ENCODE measurements at regions of chr7 and their contacts with region 1.

Region 1: DNA sequence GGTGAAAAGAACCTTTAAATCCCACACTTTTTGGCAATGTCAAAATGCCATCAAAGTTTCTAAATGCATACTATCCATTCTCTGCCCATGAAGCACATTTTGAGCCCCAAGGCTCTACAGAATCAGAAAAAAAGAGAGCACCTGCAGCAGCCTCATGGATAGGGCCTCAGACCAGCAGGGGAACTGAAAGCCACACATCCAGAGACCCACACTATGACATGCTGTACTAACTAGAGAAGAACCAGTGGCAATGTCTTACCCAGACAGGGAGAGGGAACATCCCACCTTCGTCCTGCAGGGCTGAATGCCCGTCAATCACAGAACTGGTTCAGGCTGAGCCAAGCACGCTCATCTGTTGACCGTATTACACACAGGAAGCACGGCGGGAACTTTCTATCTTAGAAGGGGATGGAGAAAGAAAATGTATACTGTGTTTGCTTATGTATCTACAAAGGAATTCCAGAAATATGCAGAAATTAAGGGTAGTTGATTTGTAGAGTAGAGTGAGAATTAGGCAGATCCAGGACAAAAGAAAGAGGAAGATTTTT is 237.2 kb downstream of the GLI3 start:
- DNase-seq: no peak
- H3K4me3 ChIP-seq: no peak overlapping the region
- H3K27me3 ChIP-seq: no peaks in the 10 kb centered on the region
- CTCF ChIP-seq: no peak

Region 2: DNA sequence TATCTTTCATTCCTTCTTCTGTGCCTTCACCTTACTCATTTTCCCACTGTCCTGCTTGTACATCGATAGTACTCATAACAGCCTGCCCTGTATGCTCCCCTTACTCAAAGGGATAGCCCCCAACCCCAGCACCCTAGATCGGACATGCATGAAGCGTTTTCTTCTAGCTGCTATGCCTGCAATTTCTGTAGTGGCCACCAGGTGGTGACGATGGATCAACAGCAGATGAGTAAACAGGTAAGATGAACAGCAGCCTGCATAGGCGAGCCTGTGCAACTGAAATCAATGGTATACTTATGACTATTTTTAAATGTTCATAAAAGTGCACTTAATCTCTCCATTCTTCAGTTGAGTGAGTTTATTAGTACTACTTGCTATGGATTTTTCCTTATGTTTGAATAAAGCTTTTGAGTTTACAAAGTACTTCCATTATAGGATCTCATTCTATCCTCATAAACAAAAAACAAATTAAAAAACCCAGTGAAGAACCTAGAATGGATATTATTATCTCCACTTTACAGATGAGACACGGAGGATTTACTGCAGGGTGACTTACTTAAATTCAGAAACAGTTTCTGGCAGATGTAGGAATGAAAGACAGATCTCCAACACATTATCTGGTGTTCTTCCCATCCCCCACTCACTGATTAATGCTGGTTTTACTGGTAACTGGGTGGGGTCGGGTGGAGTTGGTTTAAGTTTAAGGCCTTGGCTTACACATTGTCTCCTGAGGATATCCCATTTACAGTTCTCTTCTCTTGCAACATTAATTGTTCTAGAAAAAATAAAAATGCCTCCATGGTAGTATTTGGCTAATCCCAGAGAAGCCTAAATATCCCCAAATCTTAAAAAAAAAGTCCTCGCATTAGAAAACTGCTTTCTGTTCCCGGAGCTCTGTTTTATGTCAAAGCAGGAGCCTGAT is 15.1 kb after region 1 on chr7:
- CTCF ChIA-PET with region 1: interaction called, 10 read pairs
- POLR2A ChIA-PET with region 1: no interaction called
- DNase-seq: no peak
- H3K4me3 ChIP-seq: no peak overlapping the region
- H3K27me3 ChIP-seq: no peaks in the 10 kb centered on the region
- CTCF ChIP-seq: peak; percentile 66

Region 3: DNA sequence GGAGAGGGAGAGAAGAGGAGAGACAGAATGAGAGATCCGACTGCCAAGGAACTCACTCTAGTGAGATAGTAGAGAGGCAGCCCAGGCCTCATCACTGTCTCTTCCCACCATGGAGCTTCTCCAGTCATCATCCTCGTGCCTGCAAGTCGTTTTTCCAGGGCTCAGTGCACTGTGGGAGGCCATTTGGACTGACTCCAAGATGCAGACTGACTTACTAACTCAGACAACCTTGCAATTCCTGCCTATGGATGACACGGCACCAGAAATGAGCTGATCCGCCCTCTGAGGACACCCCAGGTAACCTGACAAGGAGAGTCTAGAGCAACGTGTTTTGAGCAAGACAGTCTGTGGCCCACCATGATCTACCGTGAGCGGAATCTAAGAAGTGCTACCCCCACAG is 82.3 kb after region 1 on chr7:
- CTCF ChIA-PET with region 1: no interaction called
- POLR2A ChIA-PET with region 1: no interaction called
- DNase-seq: no peak
- H3K4me3 ChIP-seq: no peak overlapping the region
- H3K27me3 ChIP-seq: no peaks in the 10 kb centered on the region
- CTCF ChIP-seq: no peak

Region 4: DNA sequence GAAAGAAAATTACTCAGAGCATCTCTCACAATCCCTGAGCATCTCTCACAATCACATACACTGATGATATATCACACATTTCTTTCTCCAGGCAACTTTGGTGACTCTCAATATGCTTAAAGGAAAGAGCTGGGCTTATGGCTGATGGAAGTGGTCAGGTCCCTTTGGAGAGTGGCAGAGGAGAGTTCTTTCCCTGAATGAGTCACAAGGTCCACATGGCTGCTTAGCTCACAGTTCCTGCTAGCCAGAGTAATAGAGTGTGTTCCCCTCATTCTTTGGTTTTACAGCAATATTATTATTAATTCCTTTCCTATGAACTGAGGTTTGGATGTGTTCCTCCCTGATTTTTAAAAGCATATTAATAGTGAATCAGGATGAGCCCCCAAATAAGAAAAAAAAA is 624.7 kb after region 1 on chr7:
- CTCF ChIA-PET with region 1: no interaction called
- POLR2A ChIA-PET with region 1: no interaction called
- DNase-seq: no peak
- H3K4me3 ChIP-seq: no peak overlapping the region
- H3K27me3 ChIP-seq: no peaks in the 10 kb centered on the region
- CTCF ChIP-seq: no peak